BJ (cell line): ENCODE measurements at regions of chr9 and their contacts with region 1.

Region 1: DNA sequence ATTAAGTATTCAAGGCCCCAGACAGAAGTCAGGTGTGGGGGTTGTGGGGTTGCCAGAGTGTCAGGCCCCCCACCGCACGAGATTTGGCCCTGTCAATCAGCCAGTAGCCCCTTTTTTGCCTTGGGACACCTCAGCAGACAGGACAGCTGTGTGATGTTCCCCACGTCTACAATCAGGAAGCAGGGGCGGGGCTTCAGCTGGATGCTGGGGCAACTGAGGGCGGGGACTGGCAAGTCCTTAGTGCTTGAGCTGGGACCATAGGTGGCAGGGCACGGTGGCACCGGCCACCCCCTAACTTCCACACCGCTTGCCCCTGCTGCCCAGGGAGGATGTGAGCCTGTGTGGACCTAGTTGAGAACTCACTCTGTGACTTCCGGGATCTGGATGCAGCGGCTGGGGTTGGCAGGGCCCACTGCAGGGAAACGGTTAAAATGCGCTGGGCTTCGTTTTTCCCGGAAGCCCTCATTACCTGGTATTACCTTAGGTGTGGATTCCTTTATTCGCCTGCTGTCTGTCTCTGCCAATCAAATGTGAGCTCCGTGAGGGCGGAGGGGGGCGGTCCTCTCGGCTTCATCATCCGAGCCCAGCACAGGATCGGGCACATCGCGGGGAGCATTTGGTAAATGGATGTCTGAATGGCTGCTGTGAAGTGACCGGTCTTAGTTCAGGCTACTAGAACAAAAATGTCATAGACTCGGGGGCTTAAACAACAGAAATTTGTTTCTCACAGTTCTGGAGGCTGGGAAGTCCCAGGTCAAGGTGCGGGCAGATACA is 7.5 kb upstream of the GTF3C5 start:
- DNase-seq: no peak
- H3K4me3 ChIP-seq: no peak overlapping the region
- H3K27me3 ChIP-seq: no peaks in the 10 kb centered on the region
- CTCF ChIP-seq: no peak

Region 2: GRCh38 chr9:132833550-132834121 is 189.7 kb before region 1 on chr9:
- CTCF ChIA-PET with region 1: no interaction called
- POLR2A ChIA-PET with region 1: no interaction called
- DNase-seq: no peak
- H3K4me3 ChIP-seq: no peak overlapping the region
- H3K27me3 ChIP-seq: peaks cover 14% of the 10 kb centered on the region
- CTCF ChIP-seq: no peak

Region 3: DNA sequence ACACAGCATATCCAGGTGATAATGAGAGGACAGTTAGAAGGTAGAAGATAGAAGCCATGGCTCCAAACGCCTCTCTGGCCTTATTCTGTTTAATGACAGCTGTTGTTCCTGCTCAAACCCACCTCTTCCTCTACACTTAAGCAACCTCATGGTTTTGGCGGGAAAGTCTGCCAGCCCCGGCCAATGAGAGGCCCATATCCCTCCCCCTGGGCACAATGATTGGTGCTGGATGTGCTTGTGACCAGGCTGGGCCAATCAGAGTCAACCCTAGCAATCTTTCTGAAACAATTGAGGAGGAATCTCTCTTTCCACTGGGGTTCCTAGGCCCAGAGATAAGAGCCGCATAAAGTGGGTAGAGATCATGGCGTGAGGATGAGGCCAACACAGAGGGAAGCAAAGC is 49.6 kb before region 1 on chr9:
- CTCF ChIA-PET with region 1: interaction called, 18 read pairs
- POLR2A ChIA-PET with region 1: no interaction called
- DNase-seq: no peak
- H3K4me3 ChIP-seq: no peak overlapping the region
- H3K27me3 ChIP-seq: peaks cover 17% of the 10 kb centered on the region
- CTCF ChIP-seq: no peak

Region 4: GRCh38 chr9:133004091-133004998 is 19.0 kb before region 1 on chr9:
- CTCF ChIA-PET with region 1: interaction called, 46 read pairs
- POLR2A ChIA-PET with region 1: no interaction called
- DNase-seq: no peak
- H3K4me3 ChIP-seq: no peak overlapping the region
- H3K27me3 ChIP-seq: peaks cover 15% of the 10 kb centered on the region
- CTCF ChIP-seq: no peak

Region 5: GRCh38 chr9:133009906-133010582 is 13.3 kb before region 1 on chr9:
- CTCF ChIA-PET with region 1: interaction called, 55 read pairs
- POLR2A ChIA-PET with region 1: no interaction called
- DNase-seq: no peak
- H3K4me3 ChIP-seq: no peak overlapping the region
- H3K27me3 ChIP-seq: no peaks in the 10 kb centered on the region
- CTCF ChIP-seq: no peak

Region 6: DNA sequence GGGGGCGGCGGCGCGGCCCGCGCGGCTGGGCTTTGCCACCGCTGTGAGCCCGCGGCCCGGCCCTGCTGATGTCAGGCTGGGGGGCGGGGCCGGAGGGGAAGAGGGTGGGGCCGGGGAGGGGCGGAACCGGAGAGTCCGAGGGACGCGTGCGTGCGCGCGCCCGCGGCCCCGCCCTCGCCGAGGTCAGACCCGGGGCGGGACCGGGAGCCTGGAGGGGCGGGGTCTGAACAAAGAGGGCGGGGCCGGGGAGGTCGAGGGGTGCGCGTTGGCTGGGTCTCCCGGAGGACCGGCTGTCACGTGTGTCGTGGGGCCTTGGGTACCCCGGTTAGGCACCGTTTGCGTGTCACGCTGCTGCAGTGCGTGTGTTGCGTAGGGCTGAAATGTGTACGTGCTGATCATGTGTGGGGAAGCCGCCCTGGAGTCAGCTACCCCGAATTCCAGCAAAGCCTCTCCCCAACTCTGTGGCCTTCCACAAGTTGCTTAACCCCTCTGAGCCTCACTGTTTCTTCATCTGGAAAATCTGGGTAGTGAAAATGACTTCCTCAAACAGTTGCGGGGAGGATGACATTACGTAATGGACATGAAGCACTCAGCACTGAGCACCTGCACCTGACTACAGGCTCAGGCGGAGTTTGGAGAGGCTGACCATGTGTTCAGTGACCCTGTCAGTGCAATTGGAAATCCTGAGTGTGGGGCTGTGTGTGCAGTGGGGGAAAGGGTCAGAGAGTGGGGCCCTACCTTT is 98.1 kb after region 1 on chr9 and contains the start of gene RALGDS:
- CTCF ChIA-PET with region 1: interaction called, 12 read pairs
- POLR2A ChIA-PET with region 1: no interaction called
- DNase-seq: no peak
- H3K4me3 ChIP-seq: peak within 1 kb of the TSS; percentile 57
- H3K27me3 ChIP-seq: no peaks in the 10 kb centered on the region
- CTCF ChIP-seq: no peak
- polyA plus RNA-seq, gene RALGDS: 18.0 and 25.1 TPM in 2 replicates

Region 7: GRCh38 chr9:133485361-133486260 is 462.3 kb after region 1 on chr9:
- CTCF ChIA-PET with region 1: interaction called, 11 read pairs
- POLR2A ChIA-PET with region 1: no interaction called
- DNase-seq: no peak
- H3K4me3 ChIP-seq: no peak overlapping the region
- H3K27me3 ChIP-seq: 0 out of 2 replicates have a peak, but pooled peaks cover 1% of the 10 kb centered on the region
- CTCF ChIP-seq: no peak